Heart left ventricle (tissue), 16 donors: ENCODE measurements at regions of chr4 and their contacts with region 1.

Region 1: DNA sequence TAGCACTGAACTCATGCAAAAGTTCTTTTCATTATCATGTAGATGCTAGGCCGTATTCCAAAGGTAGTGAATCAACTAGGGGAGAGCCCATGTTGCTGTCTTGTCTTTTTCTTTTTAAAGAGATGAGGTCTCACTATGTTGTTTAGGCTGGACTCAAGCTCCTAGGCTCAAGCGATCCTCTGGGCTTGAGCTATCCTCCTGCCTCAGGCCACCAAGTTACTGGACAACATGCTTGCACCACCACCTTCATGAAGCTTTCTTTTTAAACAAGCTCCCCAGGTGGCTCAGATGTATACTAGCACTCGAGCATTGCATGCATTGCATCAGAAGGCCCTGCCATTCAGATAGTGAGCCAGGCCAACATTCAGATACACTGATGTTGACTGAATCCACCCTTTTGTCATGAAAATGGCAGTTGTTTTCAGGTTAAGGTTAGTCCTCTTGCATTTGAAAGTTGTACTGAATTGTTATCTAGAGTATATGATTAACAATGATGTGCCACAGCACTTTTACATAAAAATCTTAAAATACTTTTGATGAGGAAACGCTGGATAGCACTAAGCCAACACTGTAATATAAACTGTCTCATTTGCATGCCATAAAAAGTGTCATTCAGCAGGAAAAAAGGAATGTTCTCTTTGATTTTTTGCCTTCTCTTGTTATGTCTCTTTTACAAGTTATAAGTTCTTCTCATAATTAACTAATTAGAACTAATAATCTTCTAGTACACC is 76.7 kb downstream of the FNIP2 start:
- DNase-seq: no peak
- ATAC-seq: no peak
- H3K4me3 ChIP-seq: peak overlapping the region in 4 of 12 donors; percentile 3 to 57 (median 26)
- H3K27ac ChIP-seq: peak overlapping the region in 1 of 12 donors; percentile 2
- H3K4me1 ChIP-seq: peaks cover 0 to 46% (median 5%) of the 10 kb centered on the region in 12 donors
- H3K27me3 ChIP-seq: no peaks in the 10 kb centered on the region
- CTCF ChIP-seq: no peak
- POLR2A ChIP-seq: no peak

Region 2: DNA sequence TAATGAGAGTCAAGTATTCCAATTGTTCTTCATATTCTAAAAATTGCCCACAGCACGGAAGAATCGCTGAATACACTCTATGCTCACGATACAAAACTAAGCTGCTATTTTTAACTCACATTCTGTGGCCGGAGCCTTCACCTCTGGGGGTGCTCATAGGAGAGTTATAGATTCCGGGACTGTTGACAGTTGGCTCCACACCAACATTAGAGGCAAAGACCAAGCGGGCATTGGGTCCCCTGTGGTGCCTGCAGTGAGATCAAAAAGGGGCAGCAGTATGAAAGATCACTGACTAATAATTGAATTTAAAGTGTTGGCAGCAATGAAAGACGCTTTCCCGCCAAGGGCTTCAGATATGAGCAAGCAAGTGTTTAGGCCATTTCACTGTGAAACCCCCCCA is 489.2 kb before region 1 on chr4:
- intact Hi-C with region 1: no loop called
- DNase-seq: no peak
- ATAC-seq: no peak
- H3K4me3 ChIP-seq: no peak overlapping the region
- H3K27ac ChIP-seq: no peak overlapping the region
- H3K4me1 ChIP-seq: no peaks in the 10 kb centered on the region
- H3K27me3 ChIP-seq: peaks cover 0 to 8% (median 0%) of the 10 kb centered on the region in 9 donors
- CTCF ChIP-seq: no peak
- POLR2A ChIP-seq: no peak

Region 3: GRCh38 chr4:158682066-158682465 is 163.4 kb before region 1 on chr4:
- intact Hi-C with region 1: no loop called
- DNase-seq: no peak
- ATAC-seq: peak in 1 of 4 donors; percentile 51
- H3K4me3 ChIP-seq: no peak overlapping the region
- H3K27ac ChIP-seq: no peak overlapping the region
- H3K4me1 ChIP-seq: peaks cover 0 to 9% (median 0%) of the 10 kb centered on the region in 12 donors
- H3K27me3 ChIP-seq: no peaks in the 10 kb centered on the region
- CTCF ChIP-seq: no peak
- POLR2A ChIP-seq: no peak

Region 4: DNA sequence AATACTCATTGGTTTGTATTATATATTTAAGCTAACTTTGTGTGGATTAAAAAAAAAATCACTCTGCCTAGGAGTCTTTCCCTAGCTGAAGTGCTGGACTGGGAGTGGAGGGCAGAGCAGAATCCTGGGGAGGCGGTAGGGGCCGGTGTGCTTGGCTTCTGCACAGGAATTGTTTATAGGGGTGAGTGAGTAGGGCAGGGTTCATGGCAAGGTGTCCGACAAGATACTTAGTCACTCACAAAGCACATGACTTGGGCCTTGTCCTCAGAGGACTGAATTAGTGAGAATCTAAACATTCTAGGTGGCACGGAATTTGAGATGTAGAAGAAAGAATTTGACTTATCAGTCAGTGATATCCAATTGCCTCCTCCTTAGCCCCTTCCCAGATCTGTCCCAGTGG is 44.4 kb before region 1 on chr4:
- intact Hi-C with region 1: loop called in 1 of 10 experiments (anchors 5 kb)
- DNase-seq: peak in 2 of 5 donors; percentile 42 to 60
- ATAC-seq: peak; percentile 53 to 79 (median 60)
- H3K4me3 ChIP-seq: no peak overlapping the region
- H3K27ac ChIP-seq: peak overlapping the region in 9 of 12 donors; percentile 2 to 69 (median 45)
- H3K4me1 ChIP-seq: peaks cover 0 to 89% (median 41%) of the 10 kb centered on the region in 12 donors
- H3K27me3 ChIP-seq: no peaks in the 10 kb centered on the region
- CTCF ChIP-seq: no peak
- POLR2A ChIP-seq: no peak